ENCODE measurements at regions of chr6 and their contacts with region 1.

Region 1: GRCh38 chr6:133966654-133967329 is 13.8 kb downstream of the TBPL1 start:
- DNase-seq: no peak
- H3K4me3 ChIP-seq: no peak overlapping the region
- H3K27ac ChIP-seq: no peak overlapping the region
- H3K4me1 ChIP-seq: no peaks in the 10 kb centered on the region
- H3K27me3 ChIP-seq: no peaks in the 10 kb centered on the region
- CTCF ChIP-seq: no peak
- POLR2A ChIP-seq: no peak

Region 2: DNA sequence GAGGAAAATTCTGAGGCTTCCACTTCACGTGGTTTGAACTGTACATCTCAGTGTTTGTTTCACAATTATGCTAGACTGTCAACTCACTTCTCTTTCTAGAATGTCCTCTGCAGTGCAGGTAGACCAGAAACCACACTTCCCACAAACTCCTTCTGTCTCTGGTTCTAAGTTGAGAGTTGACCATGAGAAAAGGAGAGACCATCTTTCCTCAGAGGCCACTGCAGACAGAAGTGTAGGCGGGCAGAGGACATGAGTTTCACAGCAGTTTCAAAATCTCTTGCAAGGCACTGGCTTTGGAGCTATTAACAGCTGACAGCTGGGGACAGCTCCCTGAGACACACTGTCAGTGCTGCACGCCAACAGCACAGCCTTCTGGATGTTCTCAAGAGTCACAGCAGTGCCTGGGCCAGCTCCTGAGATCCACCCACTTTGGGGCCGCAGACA is 1510.1 kb before region 1 on chr6:
- intact Hi-C with region 1: loop called (anchors 5 kb)
- DNase-seq: no peak
- H3K4me3 ChIP-seq: no peak overlapping the region
- H3K27ac ChIP-seq: no peak overlapping the region
- H3K4me1 ChIP-seq: no peaks in the 10 kb centered on the region
- H3K27me3 ChIP-seq: no peaks in the 10 kb centered on the region
- CTCF ChIP-seq: no peak
- POLR2A ChIP-seq: no peak

Region 3: GRCh38 chr6:134097114-134097707 is 130.4 kb after region 1 on chr6:
- intact Hi-C with region 1: no loop called
- DNase-seq: peak; percentile 51 to 70
- H3K4me3 ChIP-seq: no peak overlapping the region
- H3K27ac ChIP-seq: no peak overlapping the region
- H3K4me1 ChIP-seq: no peaks in the 10 kb centered on the region
- H3K27me3 ChIP-seq: no peaks in the 10 kb centered on the region
- CTCF ChIP-seq: peak; percentile 57 to 81 (median 72)
- POLR2A ChIP-seq: no peak